Right ventricle myocardium inferior (tissue), 1 donor: ENCODE measurements at regions of chr9 and their contacts with region 1.

Region 1: DNA sequence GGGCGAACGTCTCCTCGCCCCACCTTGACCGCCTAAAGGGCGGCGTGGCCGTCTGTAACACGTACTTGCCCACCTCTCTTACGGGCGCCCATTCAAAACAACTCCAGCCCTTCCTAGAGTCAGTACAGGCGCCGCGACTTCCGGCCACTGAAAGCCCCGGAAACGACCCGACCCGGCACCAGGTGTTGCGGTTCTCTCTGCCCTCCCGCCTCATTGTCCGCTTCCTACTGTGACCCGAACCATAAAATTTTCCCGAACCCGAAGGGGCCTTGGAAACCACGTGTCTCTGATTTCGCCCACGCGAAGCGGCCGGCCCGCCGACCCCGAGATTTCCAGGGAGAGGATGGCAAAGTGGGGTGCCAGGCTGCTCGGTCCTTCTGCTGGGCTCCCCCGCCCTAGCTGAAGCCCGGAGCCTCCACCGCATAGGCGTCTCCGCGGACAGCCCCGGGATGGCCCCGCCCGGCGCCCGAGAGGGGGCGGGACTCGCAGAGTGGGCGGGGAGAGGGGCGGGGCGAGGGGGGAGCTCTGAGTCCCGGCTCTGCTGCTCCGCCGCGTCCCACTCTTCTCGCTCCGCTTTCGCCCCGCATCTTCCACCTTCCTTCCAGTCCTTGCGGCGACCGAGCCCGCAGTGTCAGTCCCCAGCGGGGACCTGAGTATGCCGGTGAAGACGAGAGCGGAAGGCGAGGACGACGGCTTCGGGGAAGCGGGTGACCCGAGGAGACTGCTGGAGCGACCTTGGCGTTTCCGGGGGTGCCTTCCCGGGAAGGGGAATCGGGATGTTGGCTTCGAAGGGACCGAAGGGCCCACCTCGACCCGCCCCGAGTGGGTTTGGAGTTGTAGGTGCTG is 684 bp upstream of the PTGES2 start:
- DNase-seq: peak; percentile 93
- ATAC-seq: peak; percentile 91

Region 2: DNA sequence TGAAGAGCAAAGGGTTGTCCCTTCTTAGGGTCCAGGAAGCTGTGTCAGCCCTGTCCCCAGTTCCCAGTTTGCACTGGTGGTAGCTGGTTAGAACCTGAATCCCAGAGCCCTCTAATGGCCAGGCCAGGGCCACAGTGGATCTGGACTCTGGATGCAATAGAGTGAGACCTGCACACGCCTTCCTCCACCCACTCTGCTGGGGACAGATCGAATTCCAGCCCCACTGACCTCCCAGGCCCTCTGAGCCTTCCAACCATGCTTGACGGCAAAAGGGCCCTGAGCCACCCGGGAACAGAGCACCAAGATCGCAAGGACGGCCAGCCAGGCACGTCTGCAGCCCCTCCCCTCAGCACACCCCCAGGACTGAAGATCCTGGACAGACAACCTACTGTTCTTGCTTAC is 84.7 kb before region 1 on chr9:
- intact Hi-C with region 1: no loop called
- DNase-seq: no peak
- ATAC-seq: no peak

Region 3: DNA sequence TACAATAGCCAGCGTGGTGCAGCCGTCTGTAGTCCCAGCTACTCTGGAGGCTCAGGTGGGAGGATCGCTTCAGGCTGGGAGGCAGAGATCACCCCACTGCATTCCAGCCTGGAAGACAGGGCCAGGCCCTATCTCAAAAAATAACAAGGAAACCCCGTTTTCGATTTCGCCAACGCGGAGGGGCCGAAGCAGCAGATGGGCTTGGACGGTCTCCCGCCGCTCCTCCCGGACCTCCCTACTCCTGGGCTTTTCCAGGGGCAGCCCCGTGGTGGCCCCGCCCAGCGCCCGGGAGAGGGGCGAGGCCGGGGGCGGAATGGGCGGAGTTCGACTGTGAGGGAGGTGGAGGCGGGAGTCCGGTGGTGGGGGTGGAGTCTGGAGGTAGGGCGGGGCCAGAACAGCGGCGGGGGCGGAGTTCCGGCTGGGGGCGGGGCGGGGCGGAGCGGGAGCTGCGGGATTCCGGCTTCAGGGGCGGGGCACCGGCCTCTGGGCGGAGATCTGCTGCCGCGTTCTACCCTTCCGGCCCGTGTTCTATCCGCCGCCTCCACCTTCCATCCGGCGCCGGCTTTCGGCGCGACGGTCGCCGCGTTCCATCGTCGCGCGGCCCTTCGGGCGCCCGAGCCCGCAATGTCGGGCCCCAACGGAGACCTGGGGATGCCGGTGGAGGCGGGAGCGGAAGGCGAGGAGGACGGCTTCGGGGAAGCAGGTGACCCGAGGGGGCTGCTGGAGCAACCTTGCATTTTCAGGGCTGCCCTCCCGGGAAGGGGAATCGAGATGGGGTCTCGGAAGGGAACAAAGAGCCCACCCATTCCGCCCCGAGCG is 31.8 kb after region 1 on chr9 and contains the start of gene BBLN:
- intact Hi-C with region 1: loop called (anchors 2 kb)
- DNase-seq: peak; percentile 97
- ATAC-seq: peak; percentile 96
- total RNA-seq, gene BBLN: 36.1 TPM

Region 4: GRCh38 chr9:128344931-128345605 is 216.9 kb after region 1 on chr9:
- intact Hi-C with region 1: no loop called
- DNase-seq: no peak
- ATAC-seq: no peak